Activated naive CD4-positive, alpha-beta T cell treated with anti-CD3 and anti-CD28 coated beads for 36 hours (primary cell): ENCODE measurements at regions of chr1 and their contacts with region 1.

Region 1: DNA sequence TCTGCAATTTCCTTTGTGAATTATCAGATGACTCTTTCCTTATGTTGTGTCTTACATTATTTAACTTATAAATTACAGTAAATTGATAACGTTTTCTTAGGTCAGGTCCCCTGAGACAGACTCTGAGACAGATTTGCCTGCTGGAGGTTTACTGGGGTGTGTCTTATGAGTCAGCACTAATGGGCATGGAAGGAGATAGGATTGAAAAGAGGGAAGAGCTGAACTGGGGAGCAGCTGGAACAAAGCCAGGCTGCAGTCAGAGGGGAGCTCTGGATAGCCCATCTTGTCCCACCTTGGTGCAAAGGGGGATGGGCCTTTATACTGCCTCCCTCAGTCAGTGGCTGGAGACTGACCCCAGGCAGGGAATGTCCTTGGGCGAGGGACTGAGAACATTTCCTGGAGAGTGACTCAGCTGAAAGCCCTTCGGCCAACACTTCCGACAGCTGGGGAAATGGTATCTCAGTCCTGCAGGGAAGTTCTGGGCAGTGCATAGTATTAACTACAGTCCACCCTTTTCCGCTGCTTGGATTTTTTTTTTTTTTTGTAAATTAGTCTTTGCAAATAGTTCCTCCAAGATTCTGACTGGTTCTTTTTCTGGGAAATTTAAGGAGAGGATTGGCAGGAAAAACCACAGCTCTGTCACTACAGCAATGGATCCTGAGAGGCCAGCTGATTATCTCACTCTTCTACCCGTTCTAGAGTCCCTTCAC is 39.0 kb upstream of the CDC42BPA start:
- DNase-seq: no peak
- H3K4me3 Mint-ChIP-seq: no peak overlapping the region
- H3K27ac Mint-ChIP-seq: no peak overlapping the region
- H3K4me1 Mint-ChIP-seq: no peaks in the 10 kb centered on the region
- H3K27me3 Mint-ChIP-seq: no peaks in the 10 kb centered on the region

Region 2: DNA sequence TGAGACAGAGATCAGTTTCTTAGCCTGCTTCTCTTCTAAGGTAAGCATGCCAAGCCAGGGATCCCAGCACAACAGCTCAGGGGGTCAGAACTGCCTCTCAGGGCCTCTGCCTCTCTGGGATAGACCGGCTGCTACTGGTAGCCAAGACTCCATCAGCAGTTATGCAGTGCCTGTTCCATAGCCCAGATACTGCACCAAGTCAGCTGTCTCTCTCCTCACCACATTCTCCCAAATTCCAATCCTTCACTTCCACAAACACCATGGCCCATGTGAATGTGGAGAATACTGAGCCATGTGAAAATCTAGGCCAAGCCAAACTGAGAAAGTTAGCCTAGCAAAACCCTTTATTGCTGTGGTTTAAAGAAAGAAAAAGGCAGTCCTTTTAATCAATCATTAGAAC is 76.5 kb before region 1 on chr1:
- CTCF ChIA-PET with region 1: interaction called, 11 read pairs
- intact Hi-C with region 1: no loop called
- DNase-seq: no peak
- H3K4me3 Mint-ChIP-seq: no peak overlapping the region
- H3K27ac Mint-ChIP-seq: no peak overlapping the region
- H3K4me1 Mint-ChIP-seq: no peaks in the 10 kb centered on the region
- H3K27me3 Mint-ChIP-seq: no peaks in the 10 kb centered on the region